ENCODE measurements at regions of chr7 and their contacts with region 1.

Region 1: DNA sequence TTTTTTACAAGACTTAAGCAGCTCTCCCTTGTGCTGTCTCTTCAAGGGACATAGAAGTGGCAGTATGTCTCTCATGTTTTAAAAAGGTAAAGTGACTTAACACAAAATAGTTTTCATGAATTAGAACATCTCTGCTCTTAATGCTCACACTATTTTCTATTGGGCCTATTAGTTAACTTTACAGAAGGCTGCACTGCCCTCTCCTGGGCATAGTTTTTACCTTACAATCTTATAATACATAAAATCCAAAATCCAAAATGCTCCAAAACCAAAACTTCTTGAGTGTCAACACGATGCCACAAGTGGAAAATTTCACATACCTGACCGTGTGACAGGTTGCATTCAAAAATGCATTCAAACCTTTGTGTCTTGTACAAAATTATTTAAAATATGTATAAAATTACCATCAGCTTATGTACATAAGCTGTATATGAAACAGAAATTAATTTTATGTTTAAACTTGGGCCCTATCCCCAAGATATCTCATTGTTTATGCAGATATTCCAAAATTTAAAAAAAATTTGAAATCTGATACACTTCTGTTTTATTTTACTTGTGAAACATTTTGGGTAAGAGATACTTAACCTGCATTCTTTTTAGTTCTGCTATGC is 25.8 kb downstream of the TES start:
- DNase-seq: peak; percentile 35
- H3K4me3 ChIP-seq: no peak overlapping the region
- H3K27ac ChIP-seq: no peak overlapping the region
- H3K4me1 ChIP-seq: peaks cover 18 to 19% of the 10 kb centered on the region in 2 experiments; a peak in 3 of 4 replicates
- H3K27me3 ChIP-seq: no peaks in the 10 kb centered on the region
- CTCF ChIP-seq: peak; percentile 95
- EP300 ChIP-seq: no peak
- RAD21 ChIP-seq: peak; percentile 93

Region 2: DNA sequence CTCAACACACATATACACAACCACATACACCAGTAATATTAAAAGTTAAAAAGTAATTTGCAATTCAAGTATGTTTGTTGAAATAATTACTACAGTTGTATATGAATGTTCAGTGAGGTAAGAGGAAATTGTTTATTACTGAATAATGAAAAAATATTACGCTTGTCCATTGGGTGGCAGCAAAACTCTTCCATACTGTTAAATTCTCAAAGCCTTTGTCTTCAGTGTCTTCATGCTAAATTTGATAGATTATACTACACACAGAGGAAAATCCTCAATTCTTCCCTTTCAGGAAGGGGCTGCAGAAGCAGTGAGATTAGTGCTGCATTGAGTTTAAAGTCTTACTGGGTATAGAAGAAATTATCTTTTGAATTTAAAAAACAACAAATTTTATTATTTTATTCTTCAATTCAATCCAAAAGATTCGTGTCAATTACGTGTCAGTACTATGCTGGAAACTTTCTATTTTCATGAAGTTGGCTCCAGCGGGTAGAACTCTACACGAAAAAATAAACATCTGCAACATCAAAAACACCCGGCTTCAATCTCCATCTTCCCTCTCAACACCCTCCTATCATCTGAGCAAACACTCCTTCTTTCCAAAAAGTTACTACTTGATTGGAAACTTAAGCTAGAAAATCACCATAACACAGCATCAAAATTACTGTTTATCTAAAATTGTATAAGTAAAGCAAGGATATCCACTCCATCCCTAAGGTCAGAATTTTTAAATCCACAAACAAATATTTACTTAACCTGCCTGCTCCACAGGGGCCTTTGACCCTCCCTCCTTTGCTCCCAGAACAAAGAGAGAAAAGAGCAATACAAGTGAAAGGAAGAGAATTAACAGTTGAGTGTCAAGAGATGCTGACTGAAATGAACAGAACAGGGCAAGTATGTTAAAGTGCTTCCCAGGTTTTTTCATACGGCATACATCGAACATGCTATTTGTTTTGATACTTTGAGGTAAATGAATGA is 62.8 kb before region 1 on chr7:
- CTCF ChIA-PET with region 1: interaction called, 428 read pairs
- POLR2A ChIA-PET with region 1: no interaction called
- DNase-seq: peak; percentile 38
- H3K4me3 ChIP-seq: no peak overlapping the region
- H3K27ac ChIP-seq: no peak overlapping the region
- H3K4me1 ChIP-seq: peaks cover 0 to 6% of the 10 kb centered on the region in 2 experiments; a peak in 1 of 4 replicates
- H3K27me3 ChIP-seq: peaks cover 19% of the 10 kb centered on the region
- CTCF ChIP-seq: peak; percentile 86
- EP300 ChIP-seq: no peak
- RAD21 ChIP-seq: peak; percentile 97

Region 3: DNA sequence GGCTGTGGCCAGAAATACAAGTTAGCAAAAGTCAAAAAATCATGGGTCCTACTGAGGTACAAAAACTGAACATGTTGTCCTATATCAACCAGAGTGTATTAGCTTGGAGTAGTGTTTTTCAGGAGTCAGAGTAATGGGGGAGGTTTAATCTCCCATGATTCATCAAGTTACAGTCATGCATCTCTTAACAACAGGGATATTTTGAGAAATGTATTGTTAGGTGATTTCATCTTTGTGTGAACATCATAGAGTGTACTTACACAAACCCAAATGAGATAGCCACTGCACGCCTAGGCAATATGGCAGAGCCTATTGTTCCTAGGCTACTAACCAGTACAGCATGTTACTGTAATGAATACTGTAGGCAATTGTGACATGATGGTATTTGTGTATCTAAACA is 40.7 kb before region 1 on chr7:
- CTCF ChIA-PET with region 1: interaction called, 72 read pairs
- POLR2A ChIA-PET with region 1: no interaction called
- DNase-seq: no peak
- H3K4me3 ChIP-seq: no peak overlapping the region
- H3K27ac ChIP-seq: no peak overlapping the region
- H3K4me1 ChIP-seq: no peaks in the 10 kb centered on the region; a peak in 2 of 4 replicates
- H3K27me3 ChIP-seq: peaks cover 14% of the 10 kb centered on the region
- CTCF ChIP-seq: no peak
- EP300 ChIP-seq: no peak
- RAD21 ChIP-seq: no peak

Region 4: DNA sequence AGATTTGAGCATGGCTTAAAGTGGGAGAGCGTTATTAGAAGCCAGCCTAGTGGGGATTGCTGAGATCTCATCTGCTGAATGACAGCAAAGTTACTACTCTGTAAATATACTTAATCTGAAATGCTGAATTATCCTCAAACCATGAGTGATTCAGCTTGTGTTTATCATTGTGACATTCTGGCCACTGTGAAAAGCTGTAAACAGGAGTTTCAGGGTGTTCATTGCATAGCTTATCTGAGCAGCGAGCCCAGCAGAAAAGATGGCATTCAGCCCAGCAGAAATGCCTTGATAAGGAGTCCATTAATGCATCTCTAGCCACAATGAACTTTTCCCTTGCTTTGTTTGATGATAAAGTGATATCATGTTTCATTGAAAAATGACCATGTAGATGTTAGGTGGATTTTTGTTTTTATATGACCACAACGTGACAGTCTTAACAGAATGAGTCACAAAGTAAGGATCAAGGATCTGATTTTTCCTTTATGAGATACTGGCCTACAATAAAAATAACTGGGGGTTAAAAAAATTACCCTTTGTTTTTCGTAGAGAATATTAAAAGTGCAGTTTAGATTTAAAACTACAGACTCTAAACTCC is 18.0 kb before region 1 on chr7:
- CTCF ChIA-PET with region 1: interaction called, 75 read pairs
- POLR2A ChIA-PET with region 1: no interaction called
- DNase-seq: peak; percentile 58
- H3K4me3 ChIP-seq: 0 out of 4 replicates have a peak overlapping the region, but pooled peaks of 1 of the 2 experiments have one; percentile 9
- H3K27ac ChIP-seq: peak overlapping the region; percentile 47 to 99
- H3K4me1 ChIP-seq: peaks cover 9 to 67% of the 10 kb centered on the region in 2 experiments; a peak in 3 of 4 replicates
- H3K27me3 ChIP-seq: peaks cover 10% of the 10 kb centered on the region; the same call in 1 of the 2 replicates
- CTCF ChIP-seq: no peak
- EP300 ChIP-seq: peak; percentile 92 to 97
- RAD21 ChIP-seq: peak; percentile 36; the same call in 1 of the 2 replicates

Region 5: DNA sequence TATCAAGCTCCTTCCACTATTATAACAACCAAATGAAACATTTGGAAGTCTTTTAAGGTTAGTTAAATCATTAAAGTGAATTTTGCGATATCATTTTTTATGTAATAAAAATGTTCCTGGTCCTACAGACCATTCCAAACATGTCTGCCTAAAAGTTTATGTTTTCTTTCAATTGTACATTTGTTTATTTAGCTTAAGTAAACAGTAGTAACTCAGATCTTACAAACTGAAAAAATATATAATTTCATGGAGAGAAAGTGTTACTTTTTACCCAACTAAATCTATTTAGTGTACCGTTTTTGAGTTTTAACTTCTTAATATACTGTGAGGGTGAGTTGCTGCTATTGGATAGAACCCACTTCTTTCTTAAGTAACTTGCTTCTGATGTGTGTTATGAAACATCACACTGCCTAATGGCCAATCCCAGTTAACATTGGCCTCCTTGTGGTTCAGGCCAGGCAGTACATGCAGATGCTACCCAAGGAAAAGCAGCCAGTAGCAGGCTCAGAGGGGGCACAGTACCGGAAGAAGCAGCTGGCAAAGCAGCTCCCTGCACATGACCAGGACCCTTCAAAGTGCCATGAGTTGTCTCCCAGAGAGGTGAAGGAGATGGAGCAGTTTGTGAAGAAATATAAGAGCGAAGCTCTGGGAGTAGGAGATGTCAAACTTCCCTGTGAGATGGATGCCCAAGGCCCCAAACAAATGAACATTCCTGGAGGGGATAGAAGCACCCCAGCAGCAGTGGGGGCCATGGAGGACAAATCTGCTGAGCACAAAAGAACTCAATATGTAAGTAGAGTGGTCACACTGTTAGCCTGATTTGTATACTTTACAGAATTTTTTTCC is 13.8 kb after region 1 on chr7:
- CTCF ChIA-PET with region 1: interaction called, 129 read pairs
- POLR2A ChIA-PET with region 1: interaction called, 3 read pairs
- DNase-seq: peak; percentile 40
- H3K4me3 ChIP-seq: no peak overlapping the region
- H3K27ac ChIP-seq: no peak overlapping the region
- H3K4me1 ChIP-seq: no peaks in the 10 kb centered on the region; a peak in 1 of 4 replicates
- H3K27me3 ChIP-seq: no peaks in the 10 kb centered on the region
- CTCF ChIP-seq: peak; percentile 67
- EP300 ChIP-seq: no peak
- RAD21 ChIP-seq: peak; percentile 43

Measured in SK-N-SH (cell line).